Activated CD4-positive, alpha-beta memory T cell treated with anti-CD3 and anti-CD28 coated beads for 36 hours (primary cell): ENCODE measurements at regions of chrX and their contacts with region 1.

Region 1: GRCh38 chrX:40580537-40581335 is at the start of gene ATP6AP2:
- DNase-seq: peak; percentile 94
- H3K4me3 Mint-ChIP-seq: peak within 1 kb of the TSS; percentile 84
- H3K27ac Mint-ChIP-seq: peak within 1 kb of the TSS; percentile 87
- H3K4me1 Mint-ChIP-seq: peaks cover 20% of the 10 kb centered on the region
- H3K27me3 Mint-ChIP-seq: no peaks in the 10 kb centered on the region
- total RNA-seq, gene ATP6AP2: 62.5 to 65.5 TPM

Region 2: DNA sequence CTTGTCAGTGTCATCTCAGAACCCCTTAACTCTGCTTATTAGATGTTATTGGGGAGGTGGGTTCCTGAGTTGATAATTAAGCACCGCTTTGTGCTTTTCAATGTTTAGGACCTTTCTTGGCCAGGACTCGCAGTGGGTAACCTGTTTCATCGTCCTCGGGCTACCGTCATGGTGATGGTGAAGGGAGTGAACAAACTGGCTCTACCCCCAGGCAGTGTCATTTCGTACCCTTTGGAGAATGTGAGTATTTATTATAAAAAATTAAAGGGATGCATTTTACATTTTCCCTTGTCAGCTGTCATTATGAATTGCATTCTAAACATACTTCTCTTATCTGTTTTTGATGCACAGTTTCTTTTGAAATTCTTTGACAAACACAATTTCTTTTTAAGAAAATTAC is 10.4 kb after region 1 on chrX:
- CTCF ChIA-PET with region 1: interaction called, 3 read pairs
- POLR2A ChIA-PET with region 1: no interaction called
- intact Hi-C with region 1: loop called (anchors 1 kb)
- DNase-seq: no peak
- H3K4me3 Mint-ChIP-seq: no peak overlapping the region
- H3K27ac Mint-ChIP-seq: no peak overlapping the region
- H3K4me1 Mint-ChIP-seq: peaks cover 35% of the 10 kb centered on the region
- H3K27me3 Mint-ChIP-seq: no peaks in the 10 kb centered on the region

Region 3: DNA sequence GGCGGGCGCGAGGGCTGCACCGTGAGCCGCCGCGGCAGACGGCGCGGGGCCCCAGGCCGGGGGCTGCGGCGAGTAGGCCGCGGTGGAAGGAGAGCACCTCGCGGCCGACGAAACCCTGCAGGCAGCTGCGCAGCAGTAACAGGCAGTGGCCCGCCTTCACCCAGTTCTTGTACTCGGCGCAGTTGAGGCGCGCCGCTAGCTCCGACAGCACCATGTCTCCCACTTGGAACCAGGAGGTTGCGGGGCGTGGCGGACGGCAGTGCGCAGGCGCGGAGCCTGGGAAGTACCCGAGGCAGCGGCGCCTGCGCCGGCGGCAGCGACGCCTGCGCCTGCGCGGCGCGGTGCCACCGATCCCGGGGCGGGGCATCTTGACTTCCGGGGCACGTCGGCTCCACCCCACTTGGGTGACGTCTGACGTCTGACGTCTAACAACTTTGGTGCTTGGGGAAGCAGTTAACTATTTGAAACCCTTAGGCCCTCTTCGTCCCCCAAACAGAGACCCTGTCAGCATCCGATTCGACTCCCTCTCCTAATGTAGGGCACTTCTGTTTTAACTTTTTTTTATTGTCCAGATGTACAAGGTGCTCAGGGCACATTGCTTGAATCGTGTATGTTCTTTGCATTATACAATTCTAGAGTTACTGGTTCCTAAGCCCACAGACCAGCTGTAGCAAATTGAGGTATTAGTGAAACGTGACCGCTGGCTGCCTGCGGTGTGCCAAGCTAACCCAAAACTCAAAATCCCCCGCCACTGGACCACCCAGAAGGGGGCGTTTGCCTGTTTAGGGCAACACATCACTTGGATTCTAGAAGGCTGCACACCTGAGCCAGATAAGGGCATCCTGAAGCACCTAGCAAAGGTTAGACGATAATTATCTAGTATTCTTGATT is 66.8 kb after region 1 on chrX and contains the start of gene CXorf38:
- CTCF ChIA-PET with region 1: interaction called, 5 read pairs
- POLR2A ChIA-PET with region 1: no interaction called
- intact Hi-C with region 1: loop called (anchors 1 kb)
- DNase-seq: peak; percentile 94
- H3K4me3 Mint-ChIP-seq: peak within 1 kb of the TSS; percentile 96
- H3K27ac Mint-ChIP-seq: peak within 1 kb of the TSS; percentile 94
- H3K4me1 Mint-ChIP-seq: peaks cover 19% of the 10 kb centered on the region
- H3K27me3 Mint-ChIP-seq: no peaks in the 10 kb centered on the region
- total RNA-seq, gene CXorf38: 20.2 to 20.5 TPM

Region 4: GRCh38 chrX:40735325-40736169 is 154.8 kb after region 1 on chrX and contains the start of gene MED14:
- CTCF ChIA-PET with region 1: no interaction called
- POLR2A ChIA-PET with region 1: no interaction called
- intact Hi-C with region 1: loop called (anchors 1 kb)
- DNase-seq: peak; percentile 93
- H3K4me3 Mint-ChIP-seq: peak within 1 kb of the TSS; percentile 84
- H3K27ac Mint-ChIP-seq: peak within 1 kb of the TSS; percentile 92
- H3K4me1 Mint-ChIP-seq: peaks cover 44% of the 10 kb centered on the region
- H3K27me3 Mint-ChIP-seq: no peaks in the 10 kb centered on the region
- total RNA-seq, gene MED14: 46.4 to 49.4 TPM